Activated CD4-positive, alpha-beta T cell treated with anti-CD3 and anti-CD28 coated beads for 36 hours (primary cell): ENCODE measurements at regions of chr10 and their contacts with region 1.

Region 1: GRCh38 chr10:7410862-7411670 is at the start of gene SFMBT2:
- DNase-seq: peak; percentile 80
- ATAC-seq: peak; percentile 42
- H3K4me3 Mint-ChIP-seq: peak within 1 kb of the TSS; percentile 94
- H3K27ac Mint-ChIP-seq: peak within 1 kb of the TSS; percentile 93
- H3K4me1 Mint-ChIP-seq: peaks cover 40% of the 10 kb centered on the region
- H3K27me3 Mint-ChIP-seq: peaks cover 10% of the 10 kb centered on the region
- total RNA-seq, gene SFMBT2: 17.6 to 18.0 TPM

Region 2: GRCh38 chr10:6416892-6417512 is 994.1 kb before region 1 on chr10:
- CTCF ChIA-PET with region 1: no interaction called
- POLR2A ChIA-PET with region 1: no interaction called
- intact Hi-C with region 1: loop called in 1 of 2 experiments (anchors 5 kb)
- DNase-seq: no peak
- ATAC-seq: peak; percentile 73
- H3K4me3 Mint-ChIP-seq: no peak overlapping the region
- H3K27ac Mint-ChIP-seq: no peak overlapping the region
- H3K4me1 Mint-ChIP-seq: no peaks in the 10 kb centered on the region
- H3K27me3 Mint-ChIP-seq: no peaks in the 10 kb centered on the region

Region 3: GRCh38 chr10:7184660-7185366 is 226.3 kb before region 1 on chr10:
- CTCF ChIA-PET with region 1: no interaction called
- POLR2A ChIA-PET with region 1: no interaction called
- intact Hi-C with region 1: loop called in 1 of 2 experiments (anchors 1 kb)
- DNase-seq: no peak
- ATAC-seq: peak; percentile 6
- H3K4me3 Mint-ChIP-seq: peak overlapping the region; percentile 2
- H3K27ac Mint-ChIP-seq: peak overlapping the region; percentile 89
- H3K4me1 Mint-ChIP-seq: peaks cover 69% of the 10 kb centered on the region
- H3K27me3 Mint-ChIP-seq: no peaks in the 10 kb centered on the region

Region 4: DNA sequence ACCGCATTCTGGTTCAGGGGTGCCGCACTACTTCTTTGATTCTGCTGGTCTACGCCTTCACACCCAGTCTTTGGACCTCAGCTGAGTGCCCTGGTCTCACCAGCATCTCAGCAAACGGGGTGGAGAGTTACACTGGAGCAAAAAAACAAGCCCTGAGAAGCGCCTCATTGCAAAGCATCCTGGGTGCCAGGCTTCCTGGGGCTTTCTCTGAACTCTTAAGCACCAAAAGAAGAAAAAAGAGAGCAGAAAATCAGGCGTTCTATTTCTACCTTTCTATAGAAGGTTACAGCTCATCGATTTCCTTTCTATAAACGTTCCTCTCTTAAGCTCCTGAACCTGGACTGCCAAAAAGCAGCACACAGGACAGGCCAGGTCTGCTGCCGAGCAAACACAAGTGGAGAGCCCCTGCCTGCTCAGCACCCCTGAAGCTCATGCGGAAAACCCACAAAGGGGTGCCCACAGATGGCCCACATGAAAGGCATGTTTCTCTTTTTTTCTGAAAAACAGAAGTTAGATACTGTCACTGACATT is 218.2 kb before region 1 on chr10:
- CTCF ChIA-PET with region 1: no interaction called
- POLR2A ChIA-PET with region 1: no interaction called
- intact Hi-C with region 1: loop called (anchors 2 kb)
- DNase-seq: peak; percentile 77
- ATAC-seq: peak; percentile 80
- H3K4me3 Mint-ChIP-seq: peak overlapping the region; percentile 46
- H3K27ac Mint-ChIP-seq: peak overlapping the region; percentile 94
- H3K4me1 Mint-ChIP-seq: peaks cover 74% of the 10 kb centered on the region
- H3K27me3 Mint-ChIP-seq: no peaks in the 10 kb centered on the region

Region 5: DNA sequence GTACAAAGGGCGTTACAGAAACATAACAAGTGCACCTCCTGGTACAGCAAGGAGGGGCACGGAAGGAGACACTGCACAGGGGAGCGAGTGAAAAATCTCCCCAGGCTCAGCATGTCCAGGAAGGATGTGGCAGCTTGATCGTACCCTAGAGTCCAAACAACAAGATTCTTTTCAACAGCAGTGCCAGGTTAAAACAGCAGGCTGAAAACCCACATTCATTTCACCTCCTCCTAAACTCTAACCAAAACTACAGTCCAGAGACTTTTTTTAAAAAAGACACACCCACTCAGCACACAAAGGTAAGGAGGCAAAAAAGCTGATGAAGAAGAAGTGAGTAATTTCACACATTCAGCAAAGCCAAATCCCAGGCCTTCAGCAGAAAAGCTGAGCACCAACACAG is 139.1 kb before region 1 on chr10:
- CTCF ChIA-PET with region 1: interaction called, 3 read pairs
- POLR2A ChIA-PET with region 1: interaction called, 6 read pairs
- intact Hi-C with region 1: loop called in 1 of 2 experiments (anchors 2 kb)
- DNase-seq: peak; percentile 23
- ATAC-seq: peak; percentile 37
- H3K4me3 Mint-ChIP-seq: peak overlapping the region; percentile 24
- H3K27ac Mint-ChIP-seq: peak overlapping the region; percentile 84
- H3K4me1 Mint-ChIP-seq: peaks cover 81% of the 10 kb centered on the region
- H3K27me3 Mint-ChIP-seq: no peaks in the 10 kb centered on the region

Region 6: DNA sequence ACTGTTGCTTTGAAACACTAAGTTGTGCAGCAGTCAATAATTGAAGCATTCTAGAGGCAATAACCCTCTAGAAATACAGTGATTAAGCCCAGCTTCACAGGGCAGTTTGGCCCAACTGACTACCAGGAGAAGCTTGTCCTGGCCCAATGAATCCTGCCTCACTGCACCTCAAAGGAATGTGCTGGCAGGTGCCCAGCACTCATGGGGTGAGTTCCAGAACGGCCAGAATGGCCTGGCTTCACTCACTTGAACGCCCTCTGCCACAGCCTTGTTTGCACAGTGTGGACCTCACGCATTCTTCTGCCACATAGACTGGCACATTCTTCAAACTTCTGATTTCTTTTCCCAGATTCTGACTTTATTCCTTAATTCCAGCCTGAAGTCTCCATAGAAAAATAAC is 285.5 kb after region 1 on chr10:
- CTCF ChIA-PET with region 1: no interaction called
- POLR2A ChIA-PET with region 1: no interaction called
- intact Hi-C with region 1: no loop called
- DNase-seq: no peak
- ATAC-seq: no peak
- H3K4me3 Mint-ChIP-seq: no peak overlapping the region
- H3K27ac Mint-ChIP-seq: no peak overlapping the region
- H3K4me1 Mint-ChIP-seq: peaks cover under 1% of the 10 kb centered on the region
- H3K27me3 Mint-ChIP-seq: peaks cover 7% of the 10 kb centered on the region